AG04449 (cell line): ENCODE measurements at regions of chr2 and their contacts with region 1.

Region 1: DNA sequence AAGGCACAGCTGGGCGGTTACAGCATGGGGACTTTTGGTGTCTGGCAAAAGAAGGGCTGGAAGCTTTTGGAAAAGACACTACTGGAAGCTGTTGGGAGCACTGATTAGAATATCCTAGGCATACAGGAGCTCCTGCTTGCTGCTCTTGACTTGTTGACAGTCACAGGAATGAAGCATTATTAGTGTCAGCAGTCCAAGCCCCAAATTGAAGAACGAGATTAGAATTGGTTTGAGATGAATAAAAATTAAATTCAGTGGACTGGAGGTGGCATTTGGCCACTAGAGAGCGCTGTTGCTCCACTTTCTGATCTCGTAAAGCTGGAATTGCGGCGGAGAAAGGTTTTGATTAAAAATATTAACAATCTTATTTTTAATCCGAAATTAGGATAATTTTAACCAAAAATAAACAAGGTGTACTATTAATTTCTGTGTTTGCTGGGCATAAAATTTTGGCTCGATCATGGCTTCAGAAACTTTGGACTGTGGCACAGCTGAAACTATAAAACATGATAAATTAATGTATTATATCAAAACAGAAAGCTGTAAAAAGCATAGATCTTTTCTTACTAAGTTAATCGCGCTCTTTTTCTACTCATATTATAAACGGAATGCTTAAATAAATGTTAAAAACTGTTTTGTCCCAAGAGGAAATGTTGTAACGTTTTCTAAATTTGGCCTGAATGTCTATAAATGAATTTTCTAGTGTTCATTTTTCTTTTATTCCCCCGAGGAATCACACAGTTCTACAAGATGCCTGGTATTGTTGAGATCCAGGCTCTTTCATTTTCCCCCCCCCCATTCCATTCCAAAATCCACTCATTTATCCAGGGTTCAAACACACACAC is 2.4 kb upstream of the HOXD8 start:
- DNase-seq: no peak
- H3K4me3 ChIP-seq: peak overlapping the region; percentile 13
- CTCF ChIP-seq: peak; percentile 57

Region 2: GRCh38 chr2:175957845-175958244 is 169.3 kb before region 1 on chr2:
- CTCF ChIA-PET with region 1: no interaction called
- POLR2A ChIA-PET with region 1: no interaction called
- DNase-seq: no peak
- H3K4me3 ChIP-seq: no peak overlapping the region
- CTCF ChIP-seq: no peak

Region 3: DNA sequence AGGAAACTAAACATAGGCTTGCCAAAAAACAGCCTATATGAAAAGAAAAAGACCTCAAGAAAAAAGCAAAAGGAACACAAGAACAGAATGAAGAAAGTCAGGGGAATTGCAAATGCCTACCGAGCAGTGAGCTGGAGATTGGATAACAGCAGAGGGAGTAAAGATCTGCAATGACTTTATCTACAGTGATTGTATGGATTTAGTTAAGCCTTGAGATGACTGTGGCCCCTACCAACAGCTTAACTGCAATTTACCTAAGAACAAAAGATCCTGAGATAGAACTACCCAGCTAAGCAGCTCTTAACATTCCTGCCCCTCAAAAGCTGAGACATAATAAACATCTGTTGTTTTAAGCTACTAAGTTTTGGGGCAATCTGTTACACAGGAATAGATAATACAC is 145.6 kb before region 1 on chr2:
- CTCF ChIA-PET with region 1: no interaction called
- POLR2A ChIA-PET with region 1: no interaction called
- DNase-seq: no peak
- H3K4me3 ChIP-seq: no peak overlapping the region
- CTCF ChIP-seq: no peak

Region 4: GRCh38 chr2:176110975-176111663 is 16.0 kb before region 1 on chr2:
- CTCF ChIA-PET with region 1: interaction called, 38 read pairs
- POLR2A ChIA-PET with region 1: no interaction called
- DNase-seq: no peak
- H3K4me3 ChIP-seq: no peak overlapping the region
- CTCF ChIP-seq: peak; percentile 85

Region 5: GRCh38 chr2:176157499-176158185 is 30.5 kb after region 1 on chr2:
- CTCF ChIA-PET with region 1: interaction called, 15 read pairs
- POLR2A ChIA-PET with region 1: no interaction called
- DNase-seq: no peak
- H3K4me3 ChIP-seq: peak overlapping the region; percentile 57
- CTCF ChIP-seq: no peak

Region 6: DNA sequence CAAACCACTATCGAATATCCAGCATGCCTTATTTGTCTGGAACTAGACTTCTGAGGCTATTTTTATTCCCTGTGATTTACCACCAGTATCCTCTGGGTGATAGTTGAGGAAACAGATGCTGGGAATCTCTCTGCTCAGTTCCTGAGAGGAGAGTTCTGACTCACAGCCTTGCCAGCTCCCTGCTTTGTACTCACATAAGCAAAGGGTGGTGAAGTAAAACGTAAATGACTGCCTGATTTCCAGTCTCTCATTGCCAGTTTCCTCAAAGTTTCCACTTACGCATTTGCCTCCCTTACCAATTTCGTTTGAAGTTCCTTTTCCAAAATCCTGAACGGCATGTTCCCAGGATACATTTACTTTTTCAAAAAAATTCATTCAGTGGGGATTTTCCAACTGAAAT is 1016.3 kb after region 1 on chr2:
- CTCF ChIA-PET with region 1: interaction called, 151 read pairs
- POLR2A ChIA-PET with region 1: no interaction called
- DNase-seq: peak; percentile 44
- H3K4me3 ChIP-seq: no peak overlapping the region
- CTCF ChIP-seq: no peak

Region 7: GRCh38 chr2:177148477-177149154 is 1021.5 kb after region 1 on chr2:
- CTCF ChIA-PET with region 1: interaction called, 151 read pairs
- POLR2A ChIA-PET with region 1: no interaction called
- DNase-seq: no peak
- H3K4me3 ChIP-seq: peak overlapping the region; percentile 54
- CTCF ChIP-seq: peak; percentile 91

Region 8: DNA sequence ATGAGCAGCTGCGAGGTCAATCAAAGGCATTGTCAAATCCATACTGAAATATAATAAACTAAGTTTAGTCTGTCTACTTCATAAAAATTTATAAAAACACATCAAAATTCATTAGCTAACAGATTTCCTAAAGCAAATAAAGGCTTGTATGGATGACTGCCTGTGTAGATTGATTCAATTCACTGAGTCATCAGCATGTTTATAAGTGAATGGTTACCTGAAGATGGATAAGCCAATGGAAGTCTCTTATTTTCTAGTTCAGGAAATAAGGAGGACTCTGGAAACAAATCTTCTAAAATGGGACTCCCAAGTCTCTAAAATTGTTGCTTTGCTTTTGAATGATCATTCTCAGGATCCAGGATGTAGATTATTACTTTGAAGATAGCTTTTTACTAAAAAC is 1028.5 kb after region 1 on chr2:
- CTCF ChIA-PET with region 1: interaction called, 151 read pairs
- POLR2A ChIA-PET with region 1: no interaction called
- DNase-seq: no peak
- H3K4me3 ChIP-seq: no peak overlapping the region
- CTCF ChIP-seq: no peak